ENCODE measurements at regions of chr2 and their contacts with region 1.

Region 1: GRCh38 chr2:179842498-179843153 is 18.8 kb downstream of the ZNF385B start:
- DNase-seq: no peak
- ATAC-seq: no peak
- H3K4me3 ChIP-seq: no peak overlapping the region
- H3K27ac ChIP-seq: no peak overlapping the region
- H3K4me1 ChIP-seq: no peaks in the 10 kb centered on the region
- H3K27me3 ChIP-seq: no peaks in the 10 kb centered on the region
- CTCF ChIP-seq: peak; percentile 51

Region 2: GRCh38 chr2:179720173-179720772 is 122.4 kb before region 1 on chr2:
- CTCF ChIA-PET with region 1: no interaction called
- POLR2A ChIA-PET with region 1: no interaction called
- in situ Hi-C with region 1: no loop called
- intact Hi-C with region 1: no loop called
- DNase-seq: no peak
- ATAC-seq: no peak
- H3K4me3 ChIP-seq: no peak overlapping the region
- H3K27ac ChIP-seq: no peak overlapping the region
- H3K4me1 ChIP-seq: no peaks in the 10 kb centered on the region
- H3K27me3 ChIP-seq: no peaks in the 10 kb centered on the region
- CTCF ChIP-seq: no peak

Region 3: GRCh38 chr2:179860255-179861026 is 17.8 kb after region 1 on chr2:
- CTCF ChIA-PET with region 1: no interaction called
- POLR2A ChIA-PET with region 1: no interaction called
- in situ Hi-C with region 1: no loop called
- intact Hi-C with region 1: no loop called
- DNase-seq: no peak
- ATAC-seq: peak; percentile 65
- H3K4me3 ChIP-seq: peak overlapping the region; percentile 32 to 36
- H3K27ac ChIP-seq: no peak overlapping the region
- H3K4me1 ChIP-seq: no peaks in the 10 kb centered on the region
- H3K27me3 ChIP-seq: peaks cover 33% of the 10 kb centered on the region
- CTCF ChIP-seq: no peak

Region 4: GRCh38 chr2:180077295-180077906 is 234.8 kb after region 1 on chr2:
- CTCF ChIA-PET with region 1: no interaction called
- POLR2A ChIA-PET with region 1: no interaction called
- in situ Hi-C with region 1: no loop called
- intact Hi-C with region 1: loop called (anchors 5 kb)
- DNase-seq: peak; percentile 8
- ATAC-seq: peak; percentile 73; the same call in 1 of the 2 replicates
- H3K4me3 ChIP-seq: no peak overlapping the region
- H3K27ac ChIP-seq: no peak overlapping the region
- H3K4me1 ChIP-seq: no peaks in the 10 kb centered on the region
- H3K27me3 ChIP-seq: no peaks in the 10 kb centered on the region
- CTCF ChIP-seq: peak; percentile 74; the same call in 1 of the 2 replicates

Region 5: GRCh38 chr2:180101846-180102245 is 259.2 kb after region 1 on chr2:
- CTCF ChIA-PET with region 1: no interaction called
- POLR2A ChIA-PET with region 1: no interaction called
- in situ Hi-C with region 1: no loop called
- intact Hi-C with region 1: no loop called
- DNase-seq: no peak
- ATAC-seq: no peak
- H3K4me3 ChIP-seq: no peak overlapping the region
- H3K27ac ChIP-seq: no peak overlapping the region
- H3K4me1 ChIP-seq: no peaks in the 10 kb centered on the region
- H3K27me3 ChIP-seq: no peaks in the 10 kb centered on the region
- CTCF ChIP-seq: no peak

Measured in Panc1 (cell line).